Right cardiac atrium (tissue), 5 donors: ENCODE measurements at regions of chr2 and their contacts with region 1.

Region 1: GRCh38 chr2:191501561-191502168 is 176.3 kb upstream of the NABP1 start:
- DNase-seq: no peak
- ATAC-seq: peak; percentile 59 to 65
- H3K4me3 ChIP-seq: no peak overlapping the region
- H3K27ac ChIP-seq: no peak overlapping the region
- H3K4me1 ChIP-seq: no peaks in the 10 kb centered on the region
- H3K27me3 ChIP-seq: no peaks in the 10 kb centered on the region

Region 2: DNA sequence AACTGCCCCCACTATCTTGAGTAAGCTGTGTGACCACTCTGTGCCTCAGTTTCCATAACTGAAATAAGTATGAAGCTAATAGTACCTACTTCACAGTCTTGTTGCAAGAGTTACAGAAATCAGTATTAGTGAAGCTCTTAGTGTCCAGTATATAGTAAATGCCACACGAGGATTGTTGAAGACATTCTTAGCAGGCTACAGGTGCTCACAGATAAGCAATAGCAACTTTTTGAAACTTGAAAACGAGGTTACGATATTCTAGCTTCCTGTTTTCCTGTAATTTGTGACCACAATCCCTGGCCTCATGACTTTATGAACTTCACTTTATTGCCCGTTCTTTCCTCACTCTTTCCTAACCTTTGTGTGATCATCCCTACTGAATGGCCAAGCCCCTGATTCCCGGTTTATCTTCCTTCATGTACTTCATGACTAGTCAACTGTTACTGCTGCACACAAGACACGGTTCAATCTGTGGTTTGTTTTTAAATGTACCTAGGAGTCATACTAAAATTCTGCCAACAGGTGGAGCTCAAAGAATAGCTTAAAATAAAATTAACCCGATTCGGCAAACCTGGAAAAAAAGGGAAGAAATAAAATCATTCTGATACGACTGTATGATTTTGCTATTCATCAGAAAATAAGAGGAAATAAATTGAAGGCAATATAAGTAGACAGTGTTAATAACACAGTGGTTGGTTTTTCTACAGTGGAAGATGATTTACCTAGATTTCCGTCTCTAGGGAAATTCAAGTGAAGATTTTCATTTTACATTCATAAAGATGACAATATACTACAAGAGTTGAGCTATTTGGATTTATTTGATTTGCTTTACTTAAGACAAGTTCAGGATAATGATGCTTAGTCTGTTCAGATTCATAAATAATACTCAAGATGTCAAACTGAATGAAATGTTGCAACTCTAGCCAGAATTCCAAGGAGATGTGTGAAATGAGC is 449.6 kb before region 1 on chr2:
- intact Hi-C with region 1: loop called in 2 of 4 experiments (anchors 5 to 10 kb)
- DNase-seq: no peak
- ATAC-seq: peak; percentile 44 to 49
- H3K4me3 ChIP-seq: no peak overlapping the region
- H3K27ac ChIP-seq: no peak overlapping the region
- H3K4me1 ChIP-seq: no peaks in the 10 kb centered on the region
- H3K27me3 ChIP-seq: no peaks in the 10 kb centered on the region

Region 3: GRCh38 chr2:191165176-191165643 is 336.5 kb before region 1 on chr2:
- intact Hi-C with region 1: loop called (anchors 5 kb)
- DNase-seq: no peak
- ATAC-seq: peak; percentile 79 to 84
- H3K4me3 ChIP-seq: no peak overlapping the region
- H3K27ac ChIP-seq: no peak overlapping the region
- H3K4me1 ChIP-seq: no peaks in the 10 kb centered on the region
- H3K27me3 ChIP-seq: no peaks in the 10 kb centered on the region

Region 4: GRCh38 chr2:191218292-191218898 is 283.3 kb before region 1 on chr2:
- intact Hi-C with region 1: loop called in 1 of 4 experiments (anchors 10 kb)
- DNase-seq: peak in 2 of 3 donors; percentile 35 to 61
- ATAC-seq: peak; percentile 62 to 81
- H3K4me3 ChIP-seq: no peak overlapping the region
- H3K27ac ChIP-seq: no peak overlapping the region
- H3K4me1 ChIP-seq: peaks cover 5% of the 10 kb centered on the region
- H3K27me3 ChIP-seq: no peaks in the 10 kb centered on the region

Region 5: DNA sequence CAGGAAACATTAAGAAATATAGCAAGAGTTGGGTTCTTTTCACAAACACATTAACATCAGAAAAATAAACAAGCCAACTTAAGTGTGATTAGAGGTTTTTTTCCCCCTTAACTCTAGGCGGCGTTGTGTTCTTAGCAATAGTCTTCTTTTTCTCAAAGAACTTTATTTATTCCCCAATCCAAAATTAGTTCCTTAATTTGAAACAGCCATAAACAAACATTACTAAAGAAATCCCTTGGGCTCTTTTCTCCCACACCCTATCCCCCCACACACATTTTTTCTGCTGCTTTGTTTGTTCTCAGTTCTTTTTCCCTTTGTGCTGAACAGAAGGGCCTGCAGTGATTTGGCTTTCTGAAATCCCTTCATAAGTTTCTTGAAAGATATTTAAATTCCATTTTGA is 269.7 kb before region 1 on chr2:
- intact Hi-C with region 1: loop called in 1 of 4 experiments (anchors 5 kb)
- DNase-seq: no peak
- ATAC-seq: no peak
- H3K4me3 ChIP-seq: no peak overlapping the region
- H3K27ac ChIP-seq: no peak overlapping the region
- H3K4me1 ChIP-seq: peaks cover 2% of the 10 kb centered on the region
- H3K27me3 ChIP-seq: no peaks in the 10 kb centered on the region

Region 6: GRCh38 chr2:192424243-192424642 is 922.6 kb after region 1 on chr2:
- intact Hi-C with region 1: no loop called
- DNase-seq: no peak
- ATAC-seq: no peak
- H3K4me3 ChIP-seq: no peak overlapping the region
- H3K27ac ChIP-seq: no peak overlapping the region
- H3K4me1 ChIP-seq: no peaks in the 10 kb centered on the region
- H3K27me3 ChIP-seq: no peaks in the 10 kb centered on the region